ENCODE measurements at regions of chr11 and their contacts with region 1.

Region 1: GRCh38 chr11:10857709-10858438 is at the start of gene ZBED5:
- DNase-seq: peak; percentile 98
- ATAC-seq: peak; percentile 97 to 98
- total RNA-seq, gene ZBED5: 36.6 to 39.9 TPM

Region 2: GRCh38 chr11:10808553-10809372 is 49.1 kb before region 1 on chr11 and contains the start of gene EIF4G2:
- intact Hi-C with region 1: loop called (anchors 1 to 5 kb)
- DNase-seq: peak; percentile 99
- ATAC-seq: peak; percentile 96 to 97
- total RNA-seq, gene EIF4G2: 665 to 793 TPM

Region 3: GRCh38 chr11:10899121-10899830 is 41.4 kb after region 1 on chr11:
- intact Hi-C with region 1: loop called in 1 of 2 experiments (anchors 5 kb)
- DNase-seq: peak; percentile 65
- ATAC-seq: peak; percentile 29 to 87

Region 4: DNA sequence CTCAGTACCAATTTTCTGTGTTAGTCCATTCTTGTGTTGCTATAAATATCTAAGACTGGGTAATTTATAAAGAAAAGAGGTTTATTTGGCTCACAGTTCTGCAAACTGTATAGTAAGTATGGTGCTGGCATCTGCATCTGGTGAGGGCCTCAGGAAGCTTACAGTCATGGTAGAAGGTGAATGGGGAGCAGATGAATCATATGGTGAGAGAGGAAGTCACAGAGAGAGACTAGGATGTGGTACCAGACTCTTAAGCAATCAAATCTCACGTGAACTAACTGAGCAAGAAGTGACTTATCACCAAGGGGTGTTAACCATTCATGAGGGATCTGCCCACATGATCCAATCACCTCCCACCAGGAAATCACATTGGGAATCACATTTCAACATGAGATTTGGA is 60.8 kb after region 1 on chr11:
- intact Hi-C with region 1: loop called in 1 of 2 experiments (anchors 10 kb)
- DNase-seq: no peak
- ATAC-seq: no peak